B cell (primary cell): ENCODE measurements at regions of chr19 and their contacts with region 1.

Region 1: GRCh38 chr19:2070436-2070827 is 19.4 kb upstream of the MKNK2 start:
- DNase-seq: no peak
- ATAC-seq: no peak
- H3K4me3 ChIP-seq: no peak overlapping the region
- H3K4me3 Mint-ChIP-seq: no peak overlapping the region
- H3K27ac ChIP-seq: peak overlapping the region in 1 of 2 donors; percentile 64
- H3K27ac Mint-ChIP-seq: peak overlapping the region; percentile 10
- H3K4me1 ChIP-seq: peaks cover 30 to 57% of the 10 kb centered on the region in 2 donors
- H3K4me1 Mint-ChIP-seq: peaks cover 54% of the 10 kb centered on the region
- H3K27me3 ChIP-seq: no peaks in the 10 kb centered on the region
- H3K27me3 Mint-ChIP-seq: no peaks in the 10 kb centered on the region
- CTCF ChIP-seq: no peak

Region 2: DNA sequence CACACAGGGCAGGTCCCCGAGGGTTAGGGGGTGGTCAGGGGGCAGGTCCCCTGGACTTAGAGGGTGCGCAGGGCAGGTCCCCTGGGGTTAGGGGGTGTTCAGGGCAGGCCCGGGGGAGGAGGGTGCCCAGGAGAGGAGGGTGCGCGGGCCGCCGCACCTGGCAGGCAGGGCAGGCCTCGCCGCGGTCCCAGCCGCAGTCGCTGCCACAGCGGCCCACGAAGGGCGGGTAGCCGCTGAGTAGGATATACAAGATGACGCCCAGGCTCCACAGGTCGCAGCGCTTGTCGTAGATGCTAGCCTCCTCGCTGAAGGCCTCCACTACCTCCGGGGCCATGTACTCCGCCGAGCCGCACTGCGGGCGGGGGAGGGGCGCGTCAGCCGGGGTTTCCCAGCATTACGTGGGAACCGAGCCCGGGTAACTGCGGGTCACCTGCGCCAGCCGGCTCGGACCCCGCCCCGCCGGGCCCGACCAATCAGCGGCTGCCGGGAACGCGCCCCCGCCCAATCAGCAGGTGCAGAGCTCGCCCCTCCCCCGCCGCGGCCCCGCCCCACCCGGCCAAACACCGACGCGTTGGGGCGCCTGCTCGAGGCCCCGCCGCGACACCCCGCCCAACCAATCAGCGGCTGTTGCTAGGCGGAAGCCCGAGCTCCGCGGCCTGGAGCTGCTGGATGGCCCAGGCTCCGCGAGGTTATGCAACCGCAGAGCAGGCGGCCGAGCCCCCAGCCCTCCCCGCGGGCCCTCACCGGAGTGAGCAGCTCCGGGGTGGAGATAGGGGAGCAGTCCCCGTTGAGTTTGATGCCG is 28.5 kb before region 1 on chr19:
- CTCF ChIA-PET with region 1: interaction called, 3 read pairs
- POLR2A ChIA-PET with region 1: interaction called, 10 read pairs
- intact Hi-C with region 1: no loop called
- DNase-seq: peak; percentile 98
- ATAC-seq: peak; percentile 73
- H3K4me3 ChIP-seq: peak overlapping the region in 4 of 5 experiments; percentile 32 to 55 (median 42)
- H3K4me3 Mint-ChIP-seq: peak overlapping the region; percentile 74
- H3K27ac ChIP-seq: peak overlapping the region; percentile 98 to 99
- H3K27ac Mint-ChIP-seq: peak overlapping the region; percentile 87
- H3K4me1 ChIP-seq: peaks cover 54 to 67% of the 10 kb centered on the region in 2 donors
- H3K4me1 Mint-ChIP-seq: peaks cover 63% of the 10 kb centered on the region
- H3K27me3 ChIP-seq: no peaks in the 10 kb centered on the region
- H3K27me3 Mint-ChIP-seq: no peaks in the 10 kb centered on the region
- CTCF ChIP-seq: no peak

Region 3: GRCh38 chr19:2109278-2109864 is 38.9 kb after region 1 on chr19:
- CTCF ChIA-PET with region 1: no interaction called
- POLR2A ChIA-PET with region 1: no interaction called
- intact Hi-C with region 1: no loop called
- DNase-seq: no peak
- ATAC-seq: no peak
- H3K4me3 ChIP-seq: no peak overlapping the region
- H3K4me3 Mint-ChIP-seq: no peak overlapping the region
- H3K27ac ChIP-seq: no peak overlapping the region
- H3K27ac Mint-ChIP-seq: no peak overlapping the region
- H3K4me1 ChIP-seq: no peaks in the 10 kb centered on the region
- H3K4me1 Mint-ChIP-seq: peaks cover 2% of the 10 kb centered on the region
- H3K27me3 ChIP-seq: no peaks in the 10 kb centered on the region
- H3K27me3 Mint-ChIP-seq: no peaks in the 10 kb centered on the region
- CTCF ChIP-seq: no peak